Posterior cingulate gyrus (tissue), 11 donors: ENCODE measurements at regions of chr5 and their contacts with region 1.

Region 1: GRCh38 chr5:141564216-141564692 is 54.5 kb downstream of the DIAPH1 start:
- DNase-seq: peak in 5 of 10 donors; percentile 10 to 36 (median 26)

Region 2: DNA sequence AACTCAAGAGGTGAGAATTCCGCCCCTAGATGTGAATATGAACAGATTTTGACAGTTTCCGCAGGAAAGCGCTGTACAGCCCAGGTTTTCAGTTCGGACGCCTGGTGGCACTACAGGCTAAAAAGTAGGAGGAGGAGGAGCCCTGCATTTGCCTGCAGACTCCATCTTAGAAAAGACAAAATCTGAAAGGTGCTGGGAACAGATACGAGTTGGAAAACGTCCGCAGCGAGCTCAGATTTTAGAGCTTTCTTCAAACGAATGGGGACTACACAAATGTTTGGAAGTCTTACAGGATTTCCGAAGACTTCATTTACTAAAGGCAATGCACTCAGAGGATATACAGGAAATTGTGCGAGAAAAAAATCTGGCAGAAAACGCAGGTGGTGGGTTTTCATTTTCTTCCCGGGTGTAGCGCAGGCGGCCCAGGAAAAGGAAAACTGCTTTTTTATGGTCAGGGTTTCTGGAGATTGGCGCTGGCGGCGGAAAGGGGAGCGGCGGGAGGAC is 479.7 kb before region 1 on chr5:
- intact Hi-C with region 1: loop called (anchors 5 kb)
- DNase-seq: peak in 7 of 10 donors; percentile 38 to 91 (median 55)

Region 3: GRCh38 chr5:141186897-141187512 is 377.2 kb before region 1 on chr5 and contains the start of gene PCDHB9:
- intact Hi-C with region 1: loop called (anchors 10 kb)
- DNase-seq: peak in 3 of 10 donors; percentile 32 to 81 (median 35)

Region 4: DNA sequence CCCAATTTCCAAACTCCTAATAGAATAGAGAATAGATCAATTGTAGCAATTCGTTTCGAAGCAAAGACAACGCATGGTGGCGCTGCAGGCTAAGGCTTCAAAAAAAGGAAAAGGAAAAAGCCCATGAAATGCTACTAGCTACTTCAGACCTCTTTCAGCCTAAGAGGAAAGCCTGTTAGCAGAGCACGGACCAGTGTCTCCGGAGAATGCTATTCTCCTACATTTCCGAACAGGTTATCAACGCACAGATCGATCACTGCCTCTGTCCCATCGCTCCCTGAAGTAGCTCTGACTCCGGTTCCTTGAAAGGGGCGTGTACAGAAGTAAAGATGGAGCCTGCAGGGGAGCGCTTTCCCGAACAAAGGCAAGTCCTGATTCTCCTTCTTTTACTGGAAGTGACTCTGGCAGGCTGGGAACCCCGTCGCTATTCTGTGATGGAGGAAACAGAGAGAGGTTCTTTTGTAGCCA is 319.0 kb before region 1 on chr5 and contains the start of gene PCDHB15:
- intact Hi-C with region 1: loop called (anchors 5 kb)
- DNase-seq: peak in 3 of 10 donors; percentile 30 to 41 (median 31)

Region 5: GRCh38 chr5:141320225-141321169 is 243.8 kb before region 1 on chr5 and contains the start of gene TAF7:
- intact Hi-C with region 1: loop called (anchors 2 kb)
- DNase-seq: peak; percentile 83 to 98 (median 88)

Region 6: GRCh38 chr5:142175039-142175438 is 610.8 kb after region 1 on chr5:
- intact Hi-C with region 1: no loop called
- DNase-seq: no peak